ENCODE measurements at regions of chr6 and their contacts with region 1.

Region 1: GRCh38 chr6:43143235-43144124 is 27.6 kb upstream of the SRF start:
- DNase-seq: peak; percentile 67 to 79 (median 71)
- H3K4me3 ChIP-seq: no peak overlapping the region
- H3K4me3 Mint-ChIP-seq: peak overlapping the region in 3 of 8 donors; percentile 39 to 69 (median 43)
- H3K27ac ChIP-seq: no peak overlapping the region
- H3K27ac Mint-ChIP-seq: peak overlapping the region in 1 of 7 donors; percentile 85
- H3K4me1 ChIP-seq: peaks cover 12% of the 10 kb centered on the region
- H3K4me1 Mint-ChIP-seq: peaks cover 1 to 11% (median 3%) of the 10 kb centered on the region in 4 donors
- H3K27me3 ChIP-seq: no peaks in the 10 kb centered on the region
- H3K27me3 Mint-ChIP-seq: peaks cover 0 to 1% of the 10 kb centered on the region in 2 donors

Region 2: GRCh38 chr6:42661540-42662153 is 481.8 kb before region 1 on chr6:
- CTCF ChIA-PET with region 1: interaction called, 3 read pairs
- POLR2A ChIA-PET with region 1: no interaction called
- intact Hi-C with region 1: loop called (anchors 10 kb)
- DNase-seq: peak; percentile 80 to 84 (median 84)
- H3K4me3 ChIP-seq: no peak overlapping the region
- H3K4me3 Mint-ChIP-seq: no peak overlapping the region
- H3K27ac ChIP-seq: no peak overlapping the region
- H3K27ac Mint-ChIP-seq: peak overlapping the region in 4 of 7 donors; percentile 0 to 15 (median 2)
- H3K4me1 ChIP-seq: no peaks in the 10 kb centered on the region
- H3K4me1 Mint-ChIP-seq: peaks cover 0 to 2% (median 0%) of the 10 kb centered on the region in 4 donors
- H3K27me3 ChIP-seq: no peaks in the 10 kb centered on the region
- H3K27me3 Mint-ChIP-seq: no peaks in the 10 kb centered on the region

Region 3: GRCh38 chr6:42907336-42907735 is 236.1 kb before region 1 on chr6:
- CTCF ChIA-PET with region 1: interaction called, 69 read pairs
- POLR2A ChIA-PET with region 1: no interaction called
- intact Hi-C with region 1: no loop called
- DNase-seq: no peak
- H3K4me3 ChIP-seq: no peak overlapping the region
- H3K4me3 Mint-ChIP-seq: no peak overlapping the region
- H3K27ac ChIP-seq: no peak overlapping the region
- H3K27ac Mint-ChIP-seq: no peak overlapping the region
- H3K4me1 ChIP-seq: no peaks in the 10 kb centered on the region
- H3K4me1 Mint-ChIP-seq: peaks cover 0 to 4% (median 0%) of the 10 kb centered on the region in 4 donors
- H3K27me3 ChIP-seq: no peaks in the 10 kb centered on the region
- H3K27me3 Mint-ChIP-seq: peaks cover 0 to 6% of the 10 kb centered on the region in 2 donors

Region 4: DNA sequence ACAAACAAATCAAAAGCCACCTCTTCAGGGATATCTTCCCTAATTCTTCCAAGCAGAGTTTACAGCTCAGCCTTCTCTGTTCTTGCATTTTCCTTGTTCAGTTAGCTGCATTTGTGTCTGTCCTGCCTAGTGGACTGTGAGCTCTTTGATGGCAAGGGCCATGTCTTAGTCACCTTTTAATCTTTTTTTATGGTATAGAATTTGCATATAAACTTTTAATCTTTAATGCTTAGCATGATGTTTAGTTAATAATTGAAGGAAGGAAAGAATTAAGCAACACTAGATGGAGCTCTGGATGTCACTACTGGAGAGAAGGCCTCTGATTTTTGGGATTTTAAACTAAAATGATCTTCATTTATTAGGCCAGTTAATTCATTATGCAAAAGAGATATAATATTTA is 147.0 kb before region 1 on chr6:
- CTCF ChIA-PET with region 1: interaction called, 10 read pairs
- POLR2A ChIA-PET with region 1: no interaction called
- intact Hi-C with region 1: no loop called
- DNase-seq: no peak
- H3K4me3 ChIP-seq: no peak overlapping the region
- H3K4me3 Mint-ChIP-seq: no peak overlapping the region
- H3K27ac ChIP-seq: no peak overlapping the region
- H3K27ac Mint-ChIP-seq: peak overlapping the region in 2 of 7 donors; percentile 61 to 73
- H3K4me1 ChIP-seq: no peaks in the 10 kb centered on the region
- H3K4me1 Mint-ChIP-seq: peaks cover 7 to 12% (median 9%) of the 10 kb centered on the region in 4 donors
- H3K27me3 ChIP-seq: no peaks in the 10 kb centered on the region
- H3K27me3 Mint-ChIP-seq: no peaks in the 10 kb centered on the region

Region 5: GRCh38 chr6:43221046-43221972 is 77.8 kb after region 1 on chr6:
- CTCF ChIA-PET with region 1: no interaction called
- POLR2A ChIA-PET with region 1: no interaction called
- intact Hi-C with region 1: no loop called
- DNase-seq: no peak
- H3K4me3 ChIP-seq: no peak overlapping the region
- H3K4me3 Mint-ChIP-seq: peak overlapping the region in 3 of 8 donors; percentile 41 to 60 (median 44)
- H3K27ac ChIP-seq: peak overlapping the region; percentile 26
- H3K27ac Mint-ChIP-seq: peak overlapping the region; percentile 82 to 97 (median 85)
- H3K4me1 ChIP-seq: peaks cover 45% of the 10 kb centered on the region
- H3K4me1 Mint-ChIP-seq: peaks cover 23 to 47% (median 35%) of the 10 kb centered on the region in 4 donors
- H3K27me3 ChIP-seq: no peaks in the 10 kb centered on the region
- H3K27me3 Mint-ChIP-seq: no peaks in the 10 kb centered on the region

Measured in CD4-positive, alpha-beta memory T cell (primary cell).